ENCODE measurements at regions of chr21 and their contacts with region 1.

Region 1: GRCh38 chr21:42440187-42440792 is 36.6 kb downstream of the UBASH3A start:
- DNase-seq: peak; percentile 38
- H3K4me3 ChIP-seq: no peak overlapping the region
- H3K27ac ChIP-seq: peak overlapping the region in 1 of 8 donors; percentile 16
- H3K4me1 ChIP-seq: no peaks in the 10 kb centered on the region
- H3K27me3 ChIP-seq: peaks cover 0 to 49% (median 3%) of the 10 kb centered on the region in 7 donors
- CTCF ChIP-seq: no peak
- POLR2A ChIP-seq: no peak

Region 2: GRCh38 chr21:42381334-42381984 is 58.8 kb before region 1 on chr21:
- intact Hi-C with region 1: loop called (anchors 10 kb)
- DNase-seq: peak; percentile 69
- H3K4me3 ChIP-seq: no peak overlapping the region
- H3K27ac ChIP-seq: no peak overlapping the region
- H3K4me1 ChIP-seq: peaks cover 0 to 32% (median 0%) of the 10 kb centered on the region in 6 donors
- H3K27me3 ChIP-seq: peaks cover 0 to 4% (median 0%) of the 10 kb centered on the region in 7 donors
- CTCF ChIP-seq: peak in 8 of 11 experiments; percentile 28 to 74 (median 59)
- POLR2A ChIP-seq: no peak